CD8-positive, alpha-beta T cell (primary cell): ENCODE measurements at regions of chr22 and their contacts with region 1.

Region 1: DNA sequence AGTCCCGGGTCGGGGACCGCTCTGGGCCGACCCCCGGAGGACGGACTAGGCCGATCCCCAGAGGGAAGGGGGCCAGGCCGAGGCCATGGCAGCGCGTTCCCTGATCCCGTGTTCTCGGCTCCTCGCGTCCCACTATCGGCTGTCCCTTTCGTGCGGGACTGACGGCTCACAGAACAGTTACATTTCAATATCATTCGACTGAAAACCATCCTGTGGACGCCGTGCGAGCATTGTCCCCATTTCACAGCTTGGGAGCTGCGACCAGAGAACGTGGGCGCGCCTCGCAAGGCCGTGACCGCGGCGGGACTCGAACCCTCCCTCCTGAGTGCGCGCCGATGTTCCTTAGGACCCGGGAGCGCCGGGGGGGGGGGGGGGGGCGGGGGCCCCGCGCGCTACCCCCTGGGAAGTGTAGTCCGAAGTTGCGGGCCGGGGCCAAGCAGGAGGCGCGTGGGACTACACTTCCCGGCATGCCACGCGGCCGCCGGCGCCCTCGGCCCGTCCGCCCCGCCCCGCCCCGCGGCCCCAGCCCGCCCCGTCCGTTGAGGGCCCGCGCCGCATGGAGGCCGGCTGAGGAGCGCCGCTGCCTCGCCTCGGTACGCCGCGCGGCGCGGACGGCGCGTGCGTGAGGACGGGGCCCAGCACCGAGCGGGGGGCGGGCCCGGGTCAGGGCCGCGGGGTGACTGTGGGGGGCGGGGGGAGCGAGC is at the start of gene TRABD:
- DNase-seq: peak; percentile 79 to 95 (median 87)
- ATAC-seq: peak; percentile 69
- H3K4me3 ChIP-seq: peak within 1 kb of the TSS; percentile 58 to 70
- H3K4me3 Mint-ChIP-seq: peak within 1 kb of the TSS; percentile 93
- H3K27ac ChIP-seq: peak within 1 kb of the TSS; percentile 45 to 71
- H3K27ac Mint-ChIP-seq: peak within 1 kb of the TSS; percentile 93
- H3K4me1 ChIP-seq: peaks cover 40% of the 10 kb centered on the region
- H3K4me1 Mint-ChIP-seq: peaks cover 32% of the 10 kb centered on the region
- H3K27me3 ChIP-seq: no peaks in the 10 kb centered on the region
- H3K27me3 Mint-ChIP-seq: peaks cover 2% of the 10 kb centered on the region
- CTCF ChIP-seq: no peak
- total RNA-seq, gene TRABD: 178 to 187 TPM

Region 2: DNA sequence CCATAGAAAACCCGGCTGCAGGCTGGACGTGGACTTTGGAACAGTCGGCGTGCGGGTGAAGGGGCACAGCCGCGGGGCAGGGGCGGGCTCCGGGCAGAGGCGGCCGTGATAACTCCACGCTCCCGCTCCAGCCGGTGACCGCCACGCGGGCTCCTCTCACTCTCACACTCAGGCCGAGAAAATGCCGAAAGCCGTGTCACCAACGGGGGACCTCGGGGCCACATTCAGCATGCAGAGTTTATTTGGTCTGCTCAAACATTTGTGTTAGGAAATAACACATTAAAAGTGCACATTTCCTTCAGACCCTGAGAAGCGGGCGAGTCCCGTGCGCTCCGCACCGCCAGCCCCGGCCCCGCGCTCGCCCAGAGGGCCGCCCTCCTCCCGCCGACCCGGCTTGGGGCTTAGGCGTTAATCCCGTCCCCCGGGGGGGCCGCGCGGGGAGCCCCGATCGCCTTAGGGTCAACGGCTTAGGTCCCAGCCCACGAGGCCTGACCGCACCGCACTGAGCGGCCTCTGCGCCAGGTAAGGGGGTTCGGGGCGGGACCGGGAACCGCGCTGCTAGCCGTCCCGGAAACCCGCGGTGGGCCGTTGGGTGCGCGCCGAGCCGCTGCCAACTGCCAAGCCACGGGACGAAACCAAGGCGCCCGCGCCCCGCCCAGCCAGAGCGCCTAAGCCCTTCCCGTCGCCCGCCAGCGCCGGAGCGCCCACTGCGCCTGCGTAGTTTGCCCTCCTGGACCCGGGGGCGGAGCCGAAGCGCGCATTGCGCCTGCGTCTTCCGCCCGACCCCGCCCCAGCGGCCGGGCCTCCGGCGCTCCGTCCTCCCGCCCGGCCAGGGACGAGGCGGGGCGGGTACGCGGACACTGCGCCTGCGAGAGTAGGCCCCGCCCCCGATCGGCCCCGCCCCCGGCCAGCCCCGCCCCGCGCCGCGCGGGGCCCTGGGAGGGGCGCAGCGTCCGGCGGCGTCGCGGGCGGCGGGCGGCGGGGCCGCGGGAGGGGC is 332.3 kb before region 1 on chr22 and contains the start of gene ZBED4:
- CTCF ChIA-PET with region 1: no interaction called
- POLR2A ChIA-PET with region 1: no interaction called
- intact Hi-C with region 1: loop called in 1 of 2 experiments (anchors 5 kb)
- DNase-seq: peak; percentile 94 to 100 (median 99)
- ATAC-seq: peak; percentile 86
- H3K4me3 ChIP-seq: peak within 1 kb of the TSS; percentile 53 to 80
- H3K4me3 Mint-ChIP-seq: peak within 1 kb of the TSS; percentile 94
- H3K27ac ChIP-seq: peak within 1 kb of the TSS; percentile 55 to 60
- H3K27ac Mint-ChIP-seq: peak within 1 kb of the TSS; percentile 93
- H3K4me1 ChIP-seq: peaks cover 45% of the 10 kb centered on the region
- H3K4me1 Mint-ChIP-seq: peaks cover 50% of the 10 kb centered on the region
- H3K27me3 ChIP-seq: peaks cover 0 to 12% of the 10 kb centered on the region in 2 experiments
- H3K27me3 Mint-ChIP-seq: no peaks in the 10 kb centered on the region
- CTCF ChIP-seq: no peak
- total RNA-seq, gene ZBED4: 16.2 to 16.6 TPM

Region 3: GRCh38 chr22:49960159-49961004 is 225.2 kb before region 1 on chr22 and contains the start of gene PIM3:
- CTCF ChIA-PET with region 1: no interaction called
- POLR2A ChIA-PET with region 1: no interaction called
- intact Hi-C with region 1: loop called in 1 of 2 experiments (anchors 2 kb)
- DNase-seq: peak; percentile 80 to 96 (median 90)
- ATAC-seq: peak; percentile 61
- H3K4me3 ChIP-seq: peak within 1 kb of the TSS; percentile 67 to 86
- H3K4me3 Mint-ChIP-seq: peak within 1 kb of the TSS; percentile 93
- H3K27ac ChIP-seq: peak within 1 kb of the TSS; percentile 71 to 80
- H3K27ac Mint-ChIP-seq: peak within 1 kb of the TSS; percentile 95
- H3K4me1 ChIP-seq: peaks cover 33% of the 10 kb centered on the region
- H3K4me1 Mint-ChIP-seq: peaks cover 17% of the 10 kb centered on the region
- H3K27me3 ChIP-seq: no peaks in the 10 kb centered on the region
- H3K27me3 Mint-ChIP-seq: no peaks in the 10 kb centered on the region
- CTCF ChIP-seq: no peak
- total RNA-seq, gene PIM3: 316 to 328 TPM

Region 4: GRCh38 chr22:50074551-50075530 is 110.7 kb before region 1 on chr22:
- CTCF ChIA-PET with region 1: no interaction called
- POLR2A ChIA-PET with region 1: no interaction called
- intact Hi-C with region 1: no loop called
- DNase-seq: no peak
- ATAC-seq: no peak
- H3K4me3 ChIP-seq: no peak overlapping the region
- H3K4me3 Mint-ChIP-seq: no peak overlapping the region
- H3K27ac ChIP-seq: no peak overlapping the region
- H3K27ac Mint-ChIP-seq: no peak overlapping the region
- H3K4me1 ChIP-seq: no peaks in the 10 kb centered on the region
- H3K4me1 Mint-ChIP-seq: no peaks in the 10 kb centered on the region
- H3K27me3 ChIP-seq: no peaks in the 10 kb centered on the region
- H3K27me3 Mint-ChIP-seq: no peaks in the 10 kb centered on the region
- CTCF ChIP-seq: no peak

Region 5: DNA sequence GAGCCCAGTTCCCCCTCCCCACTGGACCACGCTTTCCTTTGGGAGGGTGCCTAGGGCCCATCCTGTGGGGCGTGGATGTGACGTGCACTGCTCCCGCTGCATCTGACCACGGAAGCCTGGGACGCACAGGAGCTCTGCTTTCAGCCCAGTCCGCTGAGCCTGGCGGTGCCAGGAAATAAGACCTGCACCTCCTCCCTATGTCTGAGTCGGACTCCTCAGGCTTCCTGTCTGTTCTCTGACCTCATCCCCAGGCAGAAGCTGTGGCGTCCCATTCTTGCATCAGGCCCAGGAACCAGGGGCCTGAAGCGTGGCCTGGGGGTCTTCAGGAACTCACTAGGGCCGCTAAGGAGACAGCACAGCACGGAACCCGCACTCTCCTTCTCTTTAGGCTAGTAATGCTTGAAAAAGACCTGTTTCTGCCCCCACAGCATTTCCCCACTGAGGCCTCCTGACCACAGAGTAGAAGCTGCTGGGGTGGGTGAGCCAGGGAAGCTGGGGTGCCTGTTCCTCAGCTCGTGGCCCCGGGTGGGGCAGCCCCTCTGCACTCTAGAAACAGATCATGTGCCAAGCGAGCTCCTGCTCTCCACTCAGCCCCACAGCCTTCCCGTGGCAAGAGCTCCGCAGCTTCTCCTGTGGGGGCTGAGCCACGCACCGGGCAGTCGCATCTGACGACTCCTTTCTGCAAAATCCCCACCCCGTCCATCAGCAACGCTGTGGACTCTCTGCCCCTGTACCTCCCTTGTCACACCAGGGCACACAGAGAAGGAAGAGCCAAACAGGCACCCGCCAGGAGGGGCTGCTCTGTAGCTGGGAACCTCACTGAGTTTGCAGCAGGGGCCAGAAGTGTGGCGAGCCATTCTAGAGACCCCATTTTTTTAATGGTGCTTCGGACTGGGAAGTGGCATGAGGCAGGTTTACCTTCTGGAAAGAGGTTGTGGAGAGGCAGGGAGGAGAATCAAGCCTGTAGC is 73.1 kb before region 1 on chr22:
- CTCF ChIA-PET with region 1: no interaction called
- POLR2A ChIA-PET with region 1: no interaction called
- intact Hi-C with region 1: no loop called
- DNase-seq: peak in 1 of 9 experiments; percentile 5
- ATAC-seq: no peak
- H3K4me3 ChIP-seq: no peak overlapping the region
- H3K4me3 Mint-ChIP-seq: peak overlapping the region; percentile 55
- H3K27ac ChIP-seq: no peak overlapping the region
- H3K27ac Mint-ChIP-seq: peak overlapping the region; percentile 62
- H3K4me1 ChIP-seq: peaks cover 15% of the 10 kb centered on the region
- H3K4me1 Mint-ChIP-seq: peaks cover 18% of the 10 kb centered on the region
- H3K27me3 ChIP-seq: peaks cover 0 to 3% of the 10 kb centered on the region in 2 experiments
- H3K27me3 Mint-ChIP-seq: peaks cover 2% of the 10 kb centered on the region
- CTCF ChIP-seq: no peak

Region 6: GRCh38 chr22:50200461-50201190 is 15.1 kb after region 1 on chr22 and contains the start of gene SELENOO:
- CTCF ChIA-PET with region 1: interaction called, 4 read pairs
- POLR2A ChIA-PET with region 1: interaction called, 9 read pairs
- intact Hi-C with region 1: loop called (anchors 1 kb)
- DNase-seq: peak; percentile 86 to 95 (median 91)
- ATAC-seq: peak; percentile 88
- H3K4me3 ChIP-seq: peak within 1 kb of the TSS; percentile 51 to 68
- H3K4me3 Mint-ChIP-seq: peak within 1 kb of the TSS; percentile 86
- H3K27ac ChIP-seq: peak within 1 kb of the TSS; percentile 60 to 77
- H3K27ac Mint-ChIP-seq: peak within 1 kb of the TSS; percentile 84
- H3K4me1 ChIP-seq: peaks cover 17% of the 10 kb centered on the region
- H3K4me1 Mint-ChIP-seq: peaks cover 24% of the 10 kb centered on the region
- H3K27me3 ChIP-seq: no peaks in the 10 kb centered on the region
- H3K27me3 Mint-ChIP-seq: no peaks in the 10 kb centered on the region
- CTCF ChIP-seq: no peak
- total RNA-seq, gene SELENOO: 32.7 to 34.6 TPM

Region 7: GRCh38 chr22:50244420-50245213 is 59.1 kb after region 1 on chr22 and contains the start of gene TUBGCP6:
- CTCF ChIA-PET with region 1: interaction called, 4 read pairs
- POLR2A ChIA-PET with region 1: interaction called, 4 read pairs
- intact Hi-C with region 1: loop called (anchors 1 to 2 kb)
- DNase-seq: peak; percentile 77 to 96 (median 91)
- ATAC-seq: peak; percentile 77
- H3K4me3 ChIP-seq: peak within 1 kb of the TSS; percentile 99
- H3K4me3 Mint-ChIP-seq: peak within 1 kb of the TSS; percentile 100
- H3K27ac ChIP-seq: peak within 1 kb of the TSS; percentile 94 to 99
- H3K27ac Mint-ChIP-seq: peak within 1 kb of the TSS; percentile 100
- H3K4me1 ChIP-seq: peaks cover 56% of the 10 kb centered on the region
- H3K4me1 Mint-ChIP-seq: peaks cover 51% of the 10 kb centered on the region
- H3K27me3 ChIP-seq: no peaks in the 10 kb centered on the region
- H3K27me3 Mint-ChIP-seq: no peaks in the 10 kb centered on the region
- CTCF ChIP-seq: peak; percentile 27
- total RNA-seq, gene TUBGCP6: 121 to 122 TPM

Region 8: GRCh38 chr22:50360578-50360977 is 175.0 kb after region 1 on chr22:
- CTCF ChIA-PET with region 1: no interaction called
- POLR2A ChIA-PET with region 1: no interaction called
- intact Hi-C with region 1: no loop called
- DNase-seq: no peak
- ATAC-seq: no peak
- H3K4me3 ChIP-seq: no peak overlapping the region
- H3K4me3 Mint-ChIP-seq: no peak overlapping the region
- H3K27ac ChIP-seq: peak overlapping the region in 1 of 2 experiments; percentile 58
- H3K27ac Mint-ChIP-seq: peak overlapping the region; percentile 91
- H3K4me1 ChIP-seq: peaks cover 31% of the 10 kb centered on the region
- H3K4me1 Mint-ChIP-seq: peaks cover 56% of the 10 kb centered on the region
- H3K27me3 ChIP-seq: no peaks in the 10 kb centered on the region
- H3K27me3 Mint-ChIP-seq: no peaks in the 10 kb centered on the region
- CTCF ChIP-seq: no peak

Region 9: GRCh38 chr22:50469377-50470305 is 284.1 kb after region 1 on chr22:
- CTCF ChIA-PET with region 1: no interaction called
- POLR2A ChIA-PET with region 1: no interaction called
- intact Hi-C with region 1: loop called in 1 of 2 experiments (anchors 2 kb)
- DNase-seq: peak; percentile 94 to 100 (median 99)
- ATAC-seq: peak; percentile 85
- H3K4me3 ChIP-seq: peak overlapping the region; percentile 50 to 79
- H3K4me3 Mint-ChIP-seq: peak overlapping the region; percentile 75
- H3K27ac ChIP-seq: peak overlapping the region; percentile 81 to 82
- H3K27ac Mint-ChIP-seq: peak overlapping the region; percentile 96
- H3K4me1 ChIP-seq: peaks cover 79% of the 10 kb centered on the region
- H3K4me1 Mint-ChIP-seq: peaks cover 76% of the 10 kb centered on the region
- H3K27me3 ChIP-seq: no peaks in the 10 kb centered on the region
- H3K27me3 Mint-ChIP-seq: no peaks in the 10 kb centered on the region
- CTCF ChIP-seq: peak; percentile 23